IMR-90 (cell line): ENCODE measurements at regions of chr4 and their contacts with region 1.

Region 1: DNA sequence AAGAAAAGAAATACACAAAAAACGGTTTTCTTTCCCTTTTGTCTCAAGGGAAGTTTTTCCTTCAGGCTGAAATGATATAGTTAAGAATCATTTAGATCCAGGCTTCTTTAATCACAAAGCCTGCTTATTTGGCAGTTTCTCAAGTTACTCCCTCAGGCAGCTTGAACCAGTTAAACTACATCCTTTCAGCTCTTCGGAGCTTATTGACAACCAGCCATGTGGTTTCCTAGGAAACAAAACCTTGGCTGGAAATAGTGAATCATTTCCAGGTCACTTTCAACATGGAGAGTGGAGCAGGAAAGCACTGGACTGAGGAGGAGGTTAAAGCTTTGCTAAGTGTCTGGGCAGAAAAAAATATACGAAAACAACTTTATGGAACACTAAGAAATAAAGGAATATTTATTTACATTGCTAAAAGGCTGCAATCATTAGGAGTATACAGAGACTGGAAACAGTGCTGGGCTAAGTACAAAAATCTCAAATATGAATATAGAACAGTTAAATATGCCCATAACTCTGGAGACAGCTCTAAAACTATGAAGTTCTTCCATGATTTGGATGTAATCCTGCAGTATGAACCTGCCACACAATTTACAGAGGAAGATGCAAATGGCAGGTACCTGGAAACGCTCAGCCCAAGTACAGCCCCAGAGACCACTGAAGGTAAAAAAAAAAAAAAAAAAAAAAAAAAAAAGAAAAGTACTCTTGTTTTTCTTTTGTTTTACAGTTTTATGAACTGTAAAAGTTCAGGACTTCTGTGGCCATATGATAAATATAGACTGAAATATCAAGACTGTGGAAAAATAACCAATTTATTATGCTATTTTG is 23.2 kb upstream of the AASDH start:
- DNase-seq: peak; percentile 98
- ATAC-seq: peak; percentile 91
- H3K4me3 ChIP-seq: peak overlapping the region; percentile 6; the same call in 1 of the 2 replicates
- H3K27ac ChIP-seq: peak overlapping the region; percentile 60; the same call in 1 of the 2 replicates
- H3K4me1 ChIP-seq: peaks cover 2% of the 10 kb centered on the region; the same call in 1 of the 2 replicates
- H3K27me3 ChIP-seq: no peaks in the 10 kb centered on the region
- CTCF ChIP-seq: no peak
- POLR2A ChIP-seq: peak; percentile 54; the same call in 1 of the 2 replicates
- RAD21 ChIP-seq: no peak

Region 2: DNA sequence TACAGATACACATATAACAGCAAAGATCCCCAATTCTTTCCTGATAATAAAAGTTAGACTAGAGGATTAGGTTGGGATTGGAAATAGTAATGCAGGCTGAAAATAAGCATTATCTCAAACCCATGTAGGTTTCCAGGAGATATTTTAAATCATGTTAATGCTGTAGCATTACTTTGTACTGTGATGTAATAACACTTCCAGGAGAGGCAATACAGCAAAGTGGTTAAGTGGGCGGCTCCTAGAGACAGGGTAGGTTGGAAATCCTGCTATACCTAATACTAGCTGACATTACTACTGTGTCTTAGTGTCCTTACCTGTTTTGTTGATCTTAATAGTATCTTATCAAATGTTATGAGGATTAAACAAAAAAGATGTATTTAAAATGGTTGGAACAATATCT is 35.2 kb after region 1 on chr4:
- CTCF ChIA-PET with region 1: no interaction called
- POLR2A ChIA-PET with region 1: no interaction called
- dilution Hi-C with region 1: no loop called
- in situ Hi-C with region 1: no loop called
- intact Hi-C with region 1: no loop called
- DNase-seq: no peak
- ATAC-seq: no peak
- H3K4me3 ChIP-seq: no peak overlapping the region
- H3K27ac ChIP-seq: no peak overlapping the region
- H3K4me1 ChIP-seq: no peaks in the 10 kb centered on the region
- H3K27me3 ChIP-seq: no peaks in the 10 kb centered on the region
- CTCF ChIP-seq: no peak
- POLR2A ChIP-seq: no peak
- RAD21 ChIP-seq: no peak

Region 3: GRCh38 chr4:56828784-56829535 is 418.5 kb after region 1 on chr4:
- CTCF ChIA-PET with region 1: no interaction called
- POLR2A ChIA-PET with region 1: no interaction called
- dilution Hi-C with region 1: no loop called
- in situ Hi-C with region 1: loop called (anchors 25 kb)
- intact Hi-C with region 1: no loop called
- DNase-seq: peak; percentile 56
- ATAC-seq: no peak
- H3K4me3 ChIP-seq: no peak overlapping the region
- H3K27ac ChIP-seq: no peak overlapping the region
- H3K4me1 ChIP-seq: no peaks in the 10 kb centered on the region
- H3K27me3 ChIP-seq: peaks cover 5% of the 10 kb centered on the region
- CTCF ChIP-seq: no peak
- POLR2A ChIP-seq: no peak
- RAD21 ChIP-seq: no peak